ENCODE measurements at regions of chr10 and their contacts with region 1.

Region 1: GRCh38 chr10:12068449-12069269 is at the start of gene DHTKD1:
- DNase-seq: peak; percentile 99
- H3K4me3 ChIP-seq: peak within 1 kb of the TSS; percentile 65 to 96
- H3K27ac ChIP-seq: peak within 1 kb of the TSS; percentile 54 to 62
- H3K4me1 ChIP-seq: peaks cover 0 to 3% of the 10 kb centered on the region in 2 experiments; a peak in 1 of 4 replicates
- H3K27me3 ChIP-seq: no peaks in the 10 kb centered on the region
- CTCF ChIP-seq: no peak; the same call in none of the 2 replicates
- EP300 ChIP-seq: peak in 1 of 2 experiments; percentile 27; a peak in 1 of 4 replicates
- RAD21 ChIP-seq: peak; percentile 27
- polyA plus RNA-seq, gene DHTKD1: 17.7 and 24.2 TPM in 2 replicates

Region 2: GRCh38 chr10:12042797-12043651 is 25.6 kb before region 1 on chr10 and contains the start of gene UPF2:
- CTCF ChIA-PET with region 1: no interaction called
- POLR2A ChIA-PET with region 1: interaction called, 13 read pairs
- DNase-seq: peak; percentile 98
- H3K4me3 ChIP-seq: peak within 1 kb of the TSS; percentile 89 to 95
- H3K27ac ChIP-seq: peak within 1 kb of the TSS; percentile 98 to 99
- H3K4me1 ChIP-seq: peaks cover 10 to 11% of the 10 kb centered on the region in 2 experiments; a peak in 3 of 4 replicates
- H3K27me3 ChIP-seq: no peaks in the 10 kb centered on the region
- CTCF ChIP-seq: no peak
- EP300 ChIP-seq: peak in 1 of 2 experiments; percentile 7; a peak in 2 of 4 replicates
- RAD21 ChIP-seq: no peak
- polyA plus RNA-seq, gene UPF2: 4.7 and 6.4 TPM in 2 replicates